Activated T-helper 2 cell treated with anti-CD3 and anti-CD28 coated beads, Interferon-gamma antibody, Interleukin-2, Interleukin-4, amounts not matched to agents 10 μg/mL and 5 μg/mL and 100 μg/mL, durations not matched to agents 14 hours and 24 hours and 36 hours (primary cell): ENCODE measurements at regions of chr6 and their contacts with region 1.

Region 1: GRCh38 chr6:2196079-2196679 is 49.2 kb downstream of the GMDS start:
- DNase-seq: no peak
- H3K4me3 Mint-ChIP-seq: no peak overlapping the region
- H3K27ac Mint-ChIP-seq: no peak overlapping the region
- H3K4me1 Mint-ChIP-seq: no peaks in the 10 kb centered on the region
- H3K27me3 Mint-ChIP-seq: peaks cover 5% of the 10 kb centered on the region

Region 2: DNA sequence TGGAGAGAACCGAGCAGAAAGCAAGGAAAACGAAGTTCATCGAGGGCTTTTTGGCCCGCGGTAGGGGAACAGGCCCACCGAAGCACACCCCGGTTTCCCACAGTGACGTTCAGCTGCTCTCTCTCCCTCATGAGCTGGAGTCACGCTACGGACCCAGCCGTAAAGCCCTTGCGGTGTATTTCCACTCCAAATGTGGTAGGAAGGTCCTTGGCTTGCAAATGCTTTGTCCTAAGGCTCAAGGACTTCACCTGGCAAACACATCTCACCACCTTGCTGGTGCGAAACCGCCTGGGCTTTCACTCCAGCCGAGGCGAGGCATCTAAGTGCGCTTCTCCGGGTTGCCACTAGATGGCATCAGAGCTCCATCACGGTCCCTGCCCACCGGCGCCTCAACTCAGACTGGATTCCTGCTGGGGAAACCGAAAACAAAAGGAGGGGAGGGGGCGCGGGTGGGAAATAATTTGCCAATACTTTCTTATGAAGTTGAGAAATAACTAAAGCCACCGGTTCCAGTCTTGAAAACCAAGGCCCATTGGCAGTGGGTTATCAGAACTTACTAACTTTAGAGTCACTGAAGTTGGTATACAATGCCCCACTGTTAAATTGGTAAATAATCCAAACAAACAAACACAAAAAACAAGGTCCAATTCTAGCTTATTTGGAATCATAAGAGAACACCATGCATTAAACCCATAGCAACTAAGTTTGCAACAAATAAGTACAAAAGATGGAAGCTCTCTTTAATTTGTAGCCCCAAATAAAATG is 599.9 kb before region 1 on chr6:
- intact Hi-C with region 1: loop called (anchors 2 kb)
- DNase-seq: peak; percentile 42
- H3K4me3 Mint-ChIP-seq: no peak overlapping the region
- H3K27ac Mint-ChIP-seq: no peak overlapping the region
- H3K4me1 Mint-ChIP-seq: no peaks in the 10 kb centered on the region
- H3K27me3 Mint-ChIP-seq: peaks cover 55% of the 10 kb centered on the region

Region 3: GRCh38 chr6:1604158-1605030 is 591.8 kb before region 1 on chr6:
- intact Hi-C with region 1: loop called (anchors 2 kb)
- DNase-seq: peak; percentile 40
- H3K4me3 Mint-ChIP-seq: no peak overlapping the region
- H3K27ac Mint-ChIP-seq: no peak overlapping the region
- H3K4me1 Mint-ChIP-seq: peaks cover 10% of the 10 kb centered on the region
- H3K27me3 Mint-ChIP-seq: peaks cover 82% of the 10 kb centered on the region

Region 4: DNA sequence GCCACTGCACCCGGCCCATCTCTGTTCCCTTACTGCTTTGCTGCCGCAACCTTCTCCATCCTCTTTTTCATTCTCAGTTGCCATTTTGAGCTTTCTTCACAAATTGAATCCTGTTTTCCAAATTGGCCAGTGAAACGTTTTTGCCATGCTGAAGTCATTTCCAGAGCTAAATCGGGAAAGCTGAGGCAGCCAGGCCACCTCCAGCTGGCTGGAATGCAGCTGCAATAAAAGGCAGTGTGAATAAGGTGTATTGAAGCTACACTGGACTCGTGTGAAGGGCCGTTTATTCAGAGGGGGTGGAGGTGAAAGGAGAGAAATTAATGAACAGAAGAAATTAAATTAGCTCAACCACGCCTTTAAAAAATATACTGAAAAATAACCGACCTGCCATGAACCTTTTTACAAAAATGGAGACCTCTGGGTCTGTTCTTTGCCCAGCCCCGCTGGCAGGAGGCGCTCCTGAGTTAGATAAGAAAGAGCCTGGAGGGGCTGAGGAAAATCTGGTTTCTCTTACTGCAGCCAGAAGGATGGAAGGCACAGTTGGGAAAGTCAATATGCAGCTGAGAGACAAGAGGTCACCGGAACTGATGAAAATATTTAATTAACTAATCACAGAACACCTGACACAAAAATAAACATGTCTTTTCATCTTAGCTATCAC is 302.6 kb before region 1 on chr6:
- intact Hi-C with region 1: loop called (anchors 5 kb)
- DNase-seq: no peak
- H3K4me3 Mint-ChIP-seq: no peak overlapping the region
- H3K27ac Mint-ChIP-seq: no peak overlapping the region
- H3K4me1 Mint-ChIP-seq: peaks cover 8% of the 10 kb centered on the region
- H3K27me3 Mint-ChIP-seq: no peaks in the 10 kb centered on the region

Region 5: DNA sequence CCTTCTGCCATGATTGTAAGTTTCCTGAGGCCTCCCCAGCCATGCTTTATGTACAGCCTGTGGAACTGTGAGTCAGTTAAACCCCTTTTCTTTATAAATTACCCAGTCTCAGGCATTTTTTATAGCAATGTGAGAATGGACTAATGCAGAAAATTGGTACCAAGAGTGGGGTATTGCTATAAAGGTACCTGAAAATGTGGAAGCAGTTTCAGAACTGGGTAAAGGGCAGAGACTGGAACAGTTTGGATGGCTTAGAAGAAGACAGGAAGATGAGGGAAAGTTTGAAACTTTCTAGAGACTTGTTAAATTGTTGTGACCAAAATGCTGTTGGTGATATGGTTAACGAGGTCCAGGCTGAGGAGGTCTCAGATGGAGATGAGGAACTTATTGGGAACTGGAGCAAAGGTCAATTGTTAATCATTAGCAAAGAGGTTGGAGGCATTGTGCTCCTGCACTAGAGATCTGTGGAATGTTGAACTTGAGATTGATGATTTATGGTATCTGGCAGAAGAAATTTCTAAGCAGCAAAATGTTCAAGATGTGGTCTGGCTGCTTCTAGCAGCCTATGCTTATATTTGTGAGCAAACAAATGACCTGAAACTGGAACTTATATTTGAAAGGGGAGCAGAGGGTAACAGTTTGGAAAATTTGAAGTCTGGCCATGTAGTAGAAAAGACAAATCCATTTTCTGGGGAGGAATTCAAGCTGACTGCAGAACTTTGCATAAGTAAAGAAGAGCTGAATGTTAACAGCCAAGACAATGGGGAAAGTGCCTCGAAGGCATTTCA is 128.2 kb after region 1 on chr6:
- intact Hi-C with region 1: no loop called
- DNase-seq: no peak
- H3K4me3 Mint-ChIP-seq: no peak overlapping the region
- H3K27ac Mint-ChIP-seq: no peak overlapping the region
- H3K4me1 Mint-ChIP-seq: no peaks in the 10 kb centered on the region
- H3K27me3 Mint-ChIP-seq: no peaks in the 10 kb centered on the region

Region 6: DNA sequence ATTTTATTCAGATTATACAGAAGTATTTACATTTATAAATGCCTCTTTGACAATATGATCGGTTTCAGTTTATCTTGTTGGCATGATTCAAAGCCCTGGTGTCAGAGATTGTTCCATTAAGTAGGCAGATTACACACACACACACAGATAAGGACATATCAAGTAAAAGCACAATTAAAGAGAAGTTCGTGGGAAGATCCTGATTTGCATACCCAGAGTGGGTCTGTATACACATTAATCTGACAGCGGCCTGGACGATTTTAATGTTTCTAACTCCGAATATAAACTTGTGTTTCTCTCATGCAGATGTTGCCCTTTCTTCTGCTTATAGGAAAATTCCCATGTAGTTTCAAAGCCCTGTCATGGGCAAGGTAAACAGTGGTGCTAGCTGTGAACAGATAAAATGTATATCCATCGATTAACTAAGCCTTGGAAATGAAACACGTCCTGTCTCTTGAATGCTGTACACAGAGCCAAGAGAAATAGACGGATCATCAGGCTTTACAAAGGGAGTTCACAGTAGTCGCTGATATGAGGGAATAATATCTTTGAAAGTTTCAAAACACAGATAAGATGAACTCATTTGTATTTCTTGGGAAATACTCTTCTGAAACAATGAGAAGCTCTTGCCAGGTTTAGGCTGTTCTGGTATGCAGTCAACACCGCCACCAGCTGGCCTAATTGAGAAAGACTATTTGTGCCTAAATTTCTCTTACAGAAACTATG is 157.4 kb after region 1 on chr6:
- intact Hi-C with region 1: no loop called
- DNase-seq: peak; percentile 29
- H3K4me3 Mint-ChIP-seq: no peak overlapping the region
- H3K27ac Mint-ChIP-seq: no peak overlapping the region
- H3K4me1 Mint-ChIP-seq: no peaks in the 10 kb centered on the region
- H3K27me3 Mint-ChIP-seq: peaks cover 1% of the 10 kb centered on the region

Region 7: DNA sequence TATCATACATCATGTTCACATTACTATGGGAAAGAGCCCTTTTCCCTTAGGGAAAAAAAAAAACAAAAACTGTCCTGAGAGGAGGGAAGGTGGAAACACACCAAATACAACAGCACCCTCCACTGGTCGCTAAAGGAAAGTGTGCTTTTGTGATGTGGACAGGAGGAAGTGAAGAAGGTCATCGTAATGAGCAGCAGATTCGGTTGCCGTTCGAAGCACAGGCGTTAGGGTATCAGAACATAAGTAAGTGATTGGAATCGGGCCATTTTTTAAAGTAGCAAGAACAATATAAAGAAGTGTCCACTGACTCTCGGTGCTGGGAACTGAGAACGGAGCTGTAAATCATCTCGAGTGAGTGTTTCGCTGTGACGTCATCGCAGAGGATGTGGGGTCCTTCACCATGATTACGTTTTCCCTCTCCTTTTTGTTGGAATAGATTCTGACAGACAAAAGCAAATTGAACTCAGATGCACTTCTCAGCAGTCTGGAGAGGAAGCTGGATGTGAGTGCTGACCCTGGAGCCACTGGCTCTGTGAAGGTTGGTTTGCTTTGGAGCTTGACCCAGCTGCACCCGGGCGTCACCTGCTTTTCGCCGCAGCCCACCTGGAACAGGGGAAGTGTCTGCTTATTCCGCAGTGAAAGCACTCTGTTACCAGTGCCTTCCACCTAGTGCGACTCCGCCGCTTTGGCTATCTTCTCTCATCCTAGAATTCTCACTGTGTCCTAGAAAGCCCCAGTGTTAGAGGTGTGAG is 252.8 kb after region 1 on chr6:
- intact Hi-C with region 1: loop called (anchors 10 kb)
- DNase-seq: no peak
- H3K4me3 Mint-ChIP-seq: peak overlapping the region; percentile 24
- H3K27ac Mint-ChIP-seq: no peak overlapping the region
- H3K4me1 Mint-ChIP-seq: peaks cover 4% of the 10 kb centered on the region
- H3K27me3 Mint-ChIP-seq: peaks cover 27% of the 10 kb centered on the region